A673 (cell line): ENCODE measurements at regions of chr6 and their contacts with region 1.

Region 1: DNA sequence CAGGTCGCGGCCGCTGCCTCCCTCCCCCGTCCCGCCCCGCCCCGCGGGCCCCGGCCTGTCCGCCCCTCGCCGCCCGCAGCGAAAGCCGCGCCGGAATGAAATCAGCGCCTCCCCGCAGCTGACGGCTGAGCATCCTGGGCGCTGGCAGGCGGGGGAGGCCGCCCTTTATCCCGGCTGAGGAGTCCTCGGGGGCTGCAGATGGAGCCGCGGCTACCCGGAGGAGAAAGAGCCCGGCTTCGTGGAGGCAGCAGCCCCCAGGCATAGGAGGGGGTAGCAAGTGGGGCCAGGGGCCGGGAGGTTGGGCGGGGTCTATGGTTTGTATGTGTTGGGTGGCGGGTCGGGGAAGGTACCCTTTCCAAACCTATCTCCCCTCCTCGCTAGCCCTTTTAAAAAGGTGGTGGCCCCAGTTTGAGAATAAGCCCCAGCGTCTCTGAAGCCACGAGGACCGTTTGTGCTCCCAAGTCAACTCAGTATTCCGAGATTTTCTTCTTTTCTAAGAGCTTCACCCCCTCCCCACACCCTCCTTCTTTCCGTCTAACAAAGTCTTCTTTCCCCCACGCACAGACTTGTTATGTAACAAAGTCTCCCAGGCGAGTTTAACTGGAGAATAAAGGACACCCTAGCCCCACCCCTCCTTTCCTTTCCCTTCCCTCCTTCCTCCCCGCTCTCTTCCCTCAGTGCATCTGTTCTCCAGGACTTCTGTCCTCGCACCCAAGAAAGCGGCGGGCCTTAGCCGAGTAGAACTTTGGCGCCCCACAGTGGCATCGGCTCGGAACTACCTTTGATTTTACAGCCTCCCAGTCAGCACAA is 11.0 kb downstream of the POU3F2 start:
- DNase-seq: peak; percentile 96
- H3K4me3 ChIP-seq: peak overlapping the region; percentile 60
- H3K27ac ChIP-seq: peak overlapping the region; percentile 45
- H3K4me1 ChIP-seq: peaks cover 26% of the 10 kb centered on the region
- H3K27me3 ChIP-seq: no peaks in the 10 kb centered on the region
- CTCF ChIP-seq: peak; percentile 97

Region 2: GRCh38 chr6:97068211-97068610 is 1777.2 kb before region 1 on chr6:
- CTCF ChIA-PET with region 1: no interaction called
- POLR2A ChIA-PET with region 1: no interaction called
- intact Hi-C with region 1: loop called (anchors 2 kb)
- DNase-seq: peak; percentile 65
- H3K4me3 ChIP-seq: no peak overlapping the region
- H3K27ac ChIP-seq: no peak overlapping the region
- H3K4me1 ChIP-seq: peaks cover 10% of the 10 kb centered on the region
- H3K27me3 ChIP-seq: no peaks in the 10 kb centered on the region
- CTCF ChIP-seq: peak; percentile 71

Region 3: GRCh38 chr6:97437087-97437486 is 1408.3 kb before region 1 on chr6:
- CTCF ChIA-PET with region 1: no interaction called
- POLR2A ChIA-PET with region 1: no interaction called
- intact Hi-C with region 1: loop called (anchors 2 kb)
- DNase-seq: peak; percentile 71
- H3K4me3 ChIP-seq: no peak overlapping the region
- H3K27ac ChIP-seq: no peak overlapping the region
- H3K4me1 ChIP-seq: peaks cover 18% of the 10 kb centered on the region
- H3K27me3 ChIP-seq: no peaks in the 10 kb centered on the region
- CTCF ChIP-seq: peak; percentile 80

Region 4: DNA sequence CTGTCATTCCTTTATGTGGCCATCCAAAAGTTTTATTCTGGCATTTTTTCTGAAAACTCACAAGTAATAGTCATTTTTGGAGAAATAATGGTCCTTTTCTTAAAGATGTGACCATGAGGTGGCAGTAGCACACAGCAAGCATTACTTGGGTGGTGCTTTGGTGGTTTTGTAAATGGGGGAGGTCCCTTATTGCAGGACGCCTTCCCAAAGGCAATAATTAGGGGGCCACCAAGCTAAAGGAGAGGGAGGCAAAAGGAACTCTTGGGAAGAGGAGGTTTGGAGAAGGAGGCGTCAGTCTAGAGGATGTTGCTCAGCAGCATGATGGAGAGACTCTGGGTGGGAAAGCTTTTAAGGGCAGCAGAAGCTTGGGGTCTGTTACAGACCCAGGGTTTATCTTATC is 1139.8 kb before region 1 on chr6:
- CTCF ChIA-PET with region 1: no interaction called
- POLR2A ChIA-PET with region 1: no interaction called
- intact Hi-C with region 1: loop called (anchors 1 kb)
- DNase-seq: peak; percentile 55
- H3K4me3 ChIP-seq: no peak overlapping the region
- H3K27ac ChIP-seq: no peak overlapping the region
- H3K4me1 ChIP-seq: peaks cover 15% of the 10 kb centered on the region
- H3K27me3 ChIP-seq: no peaks in the 10 kb centered on the region
- CTCF ChIP-seq: peak; percentile 67

Region 5: GRCh38 chr6:98272060-98272459 is 573.4 kb before region 1 on chr6:
- CTCF ChIA-PET with region 1: no interaction called
- POLR2A ChIA-PET with region 1: no interaction called
- intact Hi-C with region 1: loop called (anchors 10 kb)
- DNase-seq: no peak
- H3K4me3 ChIP-seq: no peak overlapping the region
- H3K27ac ChIP-seq: no peak overlapping the region
- H3K4me1 ChIP-seq: peaks cover 9% of the 10 kb centered on the region
- H3K27me3 ChIP-seq: no peaks in the 10 kb centered on the region
- CTCF ChIP-seq: no peak